Sigmoid colon (tissue), 7 donors: ENCODE measurements at regions of chr6 and their contacts with region 1.

Region 1: GRCh38 chr6:30914076-30914853 is at the start of gene VARS2:
- DNase-seq: peak; percentile 96
- H3K4me3 ChIP-seq: peak within 1 kb of the TSS; percentile 46 to 65 (median 56)
- H3K27ac ChIP-seq: peak within 1 kb of the TSS; percentile 91 to 95 (median 92)
- H3K4me1 ChIP-seq: peaks cover 0 to 26% (median 22%) of the 10 kb centered on the region in 4 donors
- H3K27me3 ChIP-seq: no peaks in the 10 kb centered on the region
- CTCF ChIP-seq: peak in 2 of 4 experiments; percentile 24 to 34
- EP300 ChIP-seq: peak in 1 of 4 donors; percentile 24
- POLR2A ChIP-seq: peak; percentile 63 to 79
- total RNA-seq, gene VARS2: 6.7 to 13.0 (median 9.0) TPM

Region 2: DNA sequence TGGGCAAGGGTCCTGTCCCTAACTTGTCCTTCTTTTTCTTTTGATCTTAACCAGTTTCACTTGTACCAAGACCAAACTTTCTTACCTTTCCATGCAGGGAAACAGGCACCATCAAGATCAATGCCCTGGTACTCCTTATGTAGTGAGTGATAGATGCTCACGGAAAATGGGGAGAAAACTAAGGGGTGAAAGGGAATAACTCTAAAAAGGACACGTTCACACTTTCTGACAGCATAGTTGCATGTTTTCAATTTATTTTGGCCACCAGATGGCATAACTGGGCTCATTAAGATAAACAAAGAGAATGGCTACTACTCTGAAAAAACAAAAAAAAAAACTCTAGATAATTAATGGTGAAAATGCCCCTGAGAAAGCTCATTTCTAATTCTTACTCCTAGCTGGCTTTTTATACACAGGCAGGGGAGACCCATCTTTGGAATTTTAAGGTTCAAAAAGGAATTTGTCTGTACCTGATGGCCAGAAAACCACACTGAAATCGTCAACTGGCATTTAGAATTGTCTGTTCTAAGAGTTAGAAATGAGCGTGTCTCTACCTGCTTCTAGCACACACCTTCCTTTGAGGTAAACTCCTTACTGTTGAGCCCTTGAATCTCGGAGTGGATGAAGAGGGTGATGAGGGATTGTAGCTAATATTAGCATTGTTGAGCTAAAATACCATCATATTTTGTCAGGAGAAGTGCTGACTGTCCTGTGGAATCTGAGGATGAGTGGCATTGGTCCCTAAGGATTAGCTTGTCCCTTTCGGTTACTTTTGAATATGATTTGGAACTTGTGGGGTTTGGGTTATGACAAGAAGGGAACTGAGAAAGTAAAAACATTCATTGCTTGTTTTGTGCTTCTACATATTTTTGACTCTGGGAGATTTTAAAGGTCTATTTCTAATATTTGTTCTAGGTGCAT is 92.1 kb before region 1 on chr6:
- intact Hi-C with region 1: no loop called
- DNase-seq: no peak
- H3K4me3 ChIP-seq: no peak overlapping the region
- H3K27ac ChIP-seq: peak overlapping the region in 3 of 4 donors; percentile 14 to 69 (median 60)
- H3K4me1 ChIP-seq: peaks cover 0 to 34% (median 17%) of the 10 kb centered on the region in 4 donors
- H3K27me3 ChIP-seq: no peaks in the 10 kb centered on the region
- CTCF ChIP-seq: peak in 2 of 4 experiments; percentile 35 to 36
- EP300 ChIP-seq: no peak
- POLR2A ChIP-seq: no peak

Region 3: GRCh38 chr6:30877419-30878371 is 36.6 kb before region 1 on chr6:
- intact Hi-C with region 1: loop called (anchors 2 kb)
- DNase-seq: peak; percentile 95
- H3K4me3 ChIP-seq: peak overlapping the region in 3 of 4 donors; percentile 34 to 44 (median 42)
- H3K27ac ChIP-seq: peak overlapping the region; percentile 81 to 94 (median 88)
- H3K4me1 ChIP-seq: peaks cover 0 to 39% (median 26%) of the 10 kb centered on the region in 4 donors
- H3K27me3 ChIP-seq: no peaks in the 10 kb centered on the region
- CTCF ChIP-seq: peak; percentile 87 to 96 (median 92)
- EP300 ChIP-seq: no peak
- POLR2A ChIP-seq: no peak

Region 4: GRCh38 chr6:31068669-31069340 is 154.5 kb after region 1 on chr6:
- intact Hi-C with region 1: loop called (anchors 2 kb)
- DNase-seq: peak; percentile 78
- H3K4me3 ChIP-seq: no peak overlapping the region
- H3K27ac ChIP-seq: no peak overlapping the region
- H3K4me1 ChIP-seq: peaks cover 0 to 18% (median 14%) of the 10 kb centered on the region in 4 donors
- H3K27me3 ChIP-seq: peaks cover 0 to 16% (median 4%) of the 10 kb centered on the region in 3 donors
- CTCF ChIP-seq: peak; percentile 54 to 89 (median 74)
- EP300 ChIP-seq: no peak
- POLR2A ChIP-seq: no peak